Vagina (tissue), 2 donors: ENCODE measurements at regions of chr5 and their contacts with region 1.

Region 1: GRCh38 chr5:158099571-158100105 is 240.7 kb upstream of the CLINT1 start:
- DNase-seq: no peak
- H3K4me3 ChIP-seq: no peak overlapping the region
- H3K27ac ChIP-seq: no peak overlapping the region
- H3K4me1 ChIP-seq: no peaks in the 10 kb centered on the region
- H3K27me3 ChIP-seq: no peaks in the 10 kb centered on the region
- CTCF ChIP-seq: no peak
- POLR2A ChIP-seq: no peak

Region 2: GRCh38 chr5:156312897-156313694 is 1786.5 kb before region 1 on chr5:
- intact Hi-C with region 1: loop called (anchors 10 kb)
- DNase-seq: no peak
- H3K4me3 ChIP-seq: no peak overlapping the region
- H3K27ac ChIP-seq: no peak overlapping the region
- H3K4me1 ChIP-seq: no peaks in the 10 kb centered on the region
- H3K27me3 ChIP-seq: no peaks in the 10 kb centered on the region
- CTCF ChIP-seq: no peak
- POLR2A ChIP-seq: no peak

Region 3: GRCh38 chr5:158020555-158021418 is 78.9 kb before region 1 on chr5:
- intact Hi-C with region 1: no loop called
- DNase-seq: no peak
- H3K4me3 ChIP-seq: no peak overlapping the region
- H3K27ac ChIP-seq: no peak overlapping the region
- H3K4me1 ChIP-seq: no peaks in the 10 kb centered on the region
- H3K27me3 ChIP-seq: no peaks in the 10 kb centered on the region
- CTCF ChIP-seq: no peak
- POLR2A ChIP-seq: no peak